Psoas muscle (tissue), 8 donors: ENCODE measurements at regions of chr15 and their contacts with region 1.

Region 1: GRCh38 chr15:47301481-47301880 is 415.8 kb upstream of the SEMA6D start:
- DNase-seq: peak; percentile 53 to 87
- ATAC-seq: peak; percentile 97 to 100 (median 100)
- H3K4me3 ChIP-seq: no peak overlapping the region
- H3K27ac ChIP-seq: peak overlapping the region; percentile 80
- H3K4me1 ChIP-seq: peaks cover 8% of the 10 kb centered on the region
- H3K27me3 ChIP-seq: no peaks in the 10 kb centered on the region
- CTCF ChIP-seq: no peak

Region 2: GRCh38 chr15:47027322-47027946 is 274.0 kb before region 1 on chr15:
- intact Hi-C with region 1: no loop called
- DNase-seq: no peak
- ATAC-seq: no peak
- H3K4me3 ChIP-seq: no peak overlapping the region
- H3K27ac ChIP-seq: no peak overlapping the region
- H3K4me1 ChIP-seq: no peaks in the 10 kb centered on the region
- H3K27me3 ChIP-seq: no peaks in the 10 kb centered on the region
- CTCF ChIP-seq: no peak

Region 3: GRCh38 chr15:47177177-47177576 is 124.3 kb before region 1 on chr15:
- intact Hi-C with region 1: no loop called
- DNase-seq: no peak
- ATAC-seq: no peak
- H3K4me3 ChIP-seq: no peak overlapping the region
- H3K27ac ChIP-seq: no peak overlapping the region
- H3K4me1 ChIP-seq: no peaks in the 10 kb centered on the region
- H3K27me3 ChIP-seq: peaks cover 0 to 16% (median 0%) of the 10 kb centered on the region in 3 donors
- CTCF ChIP-seq: no peak

Region 4: GRCh38 chr15:47331841-47332393 is 30.4 kb after region 1 on chr15:
- intact Hi-C with region 1: loop called in 1 of 2 experiments (anchors 2 kb)
- DNase-seq: no peak
- ATAC-seq: peak; percentile 37 to 90 (median 76)
- H3K4me3 ChIP-seq: peak overlapping the region; percentile 2
- H3K27ac ChIP-seq: peak overlapping the region; percentile 68
- H3K4me1 ChIP-seq: peaks cover 19% of the 10 kb centered on the region
- H3K27me3 ChIP-seq: no peaks in the 10 kb centered on the region
- CTCF ChIP-seq: no peak